ENCODE measurements at regions of chr17 and their contacts with region 1.

Region 1: GRCh38 chr17:55238179-55238930 is 26.4 kb upstream of the HLF start:
- DNase-seq: peak; percentile 93
- H3K4me3 Mint-ChIP-seq: peak overlapping the region; percentile 79
- H3K27ac Mint-ChIP-seq: no peak overlapping the region
- H3K4me1 Mint-ChIP-seq: peaks cover 13% of the 10 kb centered on the region
- H3K27me3 Mint-ChIP-seq: peaks cover 33% of the 10 kb centered on the region

Region 2: DNA sequence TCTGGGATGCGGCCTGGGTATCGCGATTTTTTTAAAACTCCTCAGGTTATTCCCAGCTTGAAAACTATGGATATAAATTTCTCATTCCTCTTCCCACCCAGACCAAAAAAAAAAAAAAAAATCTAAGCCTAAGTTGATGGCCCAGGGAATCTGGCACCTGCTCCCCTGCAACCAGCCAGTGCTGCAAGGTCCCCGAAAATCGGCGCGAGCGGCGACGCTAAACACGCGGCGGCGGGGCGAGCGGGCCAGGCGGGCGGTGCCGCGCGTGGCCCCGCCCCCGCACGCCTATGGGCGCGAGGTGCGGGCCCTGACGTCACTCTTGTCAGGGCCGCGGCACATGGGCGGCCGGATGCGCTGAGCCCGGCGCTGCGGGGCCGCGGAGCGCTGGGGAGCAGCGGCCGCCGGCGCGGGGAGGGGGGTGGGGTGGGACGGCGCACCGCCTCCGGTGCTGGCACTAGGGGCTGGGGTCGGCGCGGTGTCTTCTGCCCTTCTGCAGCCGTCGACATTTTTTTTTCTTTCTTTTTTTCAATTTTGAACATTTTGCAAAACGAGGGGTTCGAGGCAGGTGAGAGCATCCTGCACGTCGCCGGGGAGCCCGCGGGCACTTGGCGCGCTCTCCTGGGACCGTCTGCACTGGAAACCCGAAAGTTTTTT is 26.4 kb after region 1 on chr17 and contains the start of gene HLF:
- intact Hi-C with region 1: loop called (anchors 1 kb)
- DNase-seq: peak; percentile 93
- H3K4me3 Mint-ChIP-seq: peak within 1 kb of the TSS; percentile 78
- H3K27ac Mint-ChIP-seq: no peak within 1 kb of the TSS
- H3K4me1 Mint-ChIP-seq: peaks cover 13% of the 10 kb centered on the region
- H3K27me3 Mint-ChIP-seq: peaks cover 77% of the 10 kb centered on the region
- total RNA-seq, gene HLF: 0.92 and 1.3 TPM in 2 replicates